ENCODE measurements at regions of chr22 and their contacts with region 1.

Region 1: GRCh38 chr22:38412435-38413084 is 42.4 kb downstream of the KCNJ4 start:
- DNase-seq: peak in 1 of 2 donors; percentile 45
- ATAC-seq: peak in 6 of 8 donors; percentile 31 to 54 (median 42)
- H3K4me3 ChIP-seq: peak overlapping the region in 9 of 10 donors; percentile 15 to 44 (median 37)
- H3K27ac ChIP-seq: peak overlapping the region in 8 of 10 donors; percentile 8 to 81 (median 68)
- H3K4me1 ChIP-seq: peaks cover 7 to 32% (median 15%) of the 10 kb centered on the region in 9 donors
- H3K27me3 ChIP-seq: peaks cover 0 to 6% (median 0%) of the 10 kb centered on the region in 7 donors
- CTCF ChIP-seq: peak; percentile 75 to 88 (median 85)

Region 2: DNA sequence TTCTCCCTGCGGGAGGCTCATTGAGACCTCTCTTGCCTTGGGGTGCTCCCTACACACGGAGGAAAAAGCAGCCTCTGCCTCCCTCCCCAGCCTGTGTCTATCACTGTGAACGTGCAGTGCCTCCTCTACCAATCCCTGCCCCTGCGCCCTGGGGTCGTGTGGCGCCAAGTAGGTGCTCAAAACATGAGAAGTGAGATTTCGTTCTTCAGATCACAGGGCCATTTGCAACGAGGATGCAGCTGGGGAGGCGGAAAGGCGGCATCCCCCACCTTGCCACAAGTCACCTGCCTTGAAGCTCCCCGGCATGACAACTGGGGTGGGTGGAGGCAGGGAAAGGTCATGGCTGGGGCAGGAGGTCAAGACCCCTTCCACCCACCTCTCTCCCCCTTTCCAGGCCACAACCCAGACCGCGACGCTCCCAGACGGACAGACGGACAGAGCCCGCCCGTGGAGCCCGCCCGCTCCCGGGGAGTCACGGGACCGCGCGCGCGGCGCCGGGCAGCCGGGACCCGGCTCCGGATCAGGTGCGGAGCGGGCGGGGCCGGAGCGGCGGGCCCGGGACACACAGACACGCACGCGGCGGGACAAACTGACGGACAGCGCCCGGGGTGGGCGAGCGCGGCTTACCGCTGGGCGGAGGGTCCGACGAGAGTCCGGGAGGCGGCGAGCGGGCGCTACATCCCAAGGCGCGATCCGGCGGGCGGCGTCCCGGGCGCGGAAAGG is 42.0 kb after region 1 on chr22:
- intact Hi-C with region 1: loop called in 3 of 10 experiments (anchors 2 to 5 kb)
- DNase-seq: no peak
- ATAC-seq: peak in 3 of 8 donors; percentile 14 to 29 (median 16)
- H3K4me3 ChIP-seq: peak overlapping the region; percentile 23 to 63 (median 52)
- H3K27ac ChIP-seq: peak overlapping the region in 9 of 10 donors; percentile 20 to 99 (median 91)
- H3K4me1 ChIP-seq: peaks cover 3 to 61% (median 22%) of the 10 kb centered on the region in 9 donors
- H3K27me3 ChIP-seq: peaks cover 10 to 92% (median 57%) of the 10 kb centered on the region in 7 donors
- CTCF ChIP-seq: no peak

Region 3: GRCh38 chr22:38467904-38468758 is 55.6 kb after region 1 on chr22 and contains the start of gene KDELR3:
- intact Hi-C with region 1: loop called in 1 of 10 experiments (anchors 5 kb)
- DNase-seq: peak; percentile 70 to 72
- ATAC-seq: peak; percentile 72 to 95 (median 86)
- H3K4me3 ChIP-seq: peak within 1 kb of the TSS; percentile 49 to 84 (median 65)
- H3K27ac ChIP-seq: peak within 1 kb of the TSS in 9 of 10 donors; percentile 18 to 78 (median 73)
- H3K4me1 ChIP-seq: peaks cover 1 to 30% (median 23%) of the 10 kb centered on the region in 9 donors
- H3K27me3 ChIP-seq: peaks cover 0 to 58% (median 0%) of the 10 kb centered on the region in 7 donors
- CTCF ChIP-seq: peak in 5 of 9 donors; percentile 5 to 36 (median 9)
- total RNA-seq, gene KDELR3: 3.4 to 12.9 (median 7.9) TPM